CD8-positive, alpha-beta T cell (primary cell): ENCODE measurements at regions of chr5 and their contacts with region 1.

Region 1: GRCh38 chr5:69234457-69235268 is at the start of gene CDK7:
- DNase-seq: peak; percentile 83 to 96 (median 92)
- ATAC-seq: peak; percentile 99
- H3K4me3 ChIP-seq: peak within 1 kb of the TSS; percentile 71 to 98
- H3K4me3 Mint-ChIP-seq: peak within 1 kb of the TSS; percentile 94
- H3K27ac ChIP-seq: peak within 1 kb of the TSS; percentile 67 to 85
- H3K27ac Mint-ChIP-seq: peak within 1 kb of the TSS; percentile 89
- H3K4me1 ChIP-seq: peaks cover 20% of the 10 kb centered on the region
- H3K4me1 Mint-ChIP-seq: peaks cover 39% of the 10 kb centered on the region
- H3K27me3 ChIP-seq: no peaks in the 10 kb centered on the region
- H3K27me3 Mint-ChIP-seq: no peaks in the 10 kb centered on the region
- CTCF ChIP-seq: no peak
- total RNA-seq, gene CDK7: 27.5 to 29.4 TPM

Region 2: GRCh38 chr5:69042915-69043658 is 191.6 kb before region 1 on chr5:
- CTCF ChIA-PET with region 1: no interaction called
- POLR2A ChIA-PET with region 1: no interaction called
- intact Hi-C with region 1: loop called in 1 of 2 experiments (anchors 2 kb)
- DNase-seq: peak; percentile 50 to 95 (median 78)
- ATAC-seq: peak; percentile 97
- H3K4me3 ChIP-seq: peak overlapping the region; percentile 54 to 64
- H3K4me3 Mint-ChIP-seq: peak overlapping the region; percentile 89
- H3K27ac ChIP-seq: peak overlapping the region; percentile 69 to 81
- H3K27ac Mint-ChIP-seq: peak overlapping the region; percentile 95
- H3K4me1 ChIP-seq: peaks cover 3% of the 10 kb centered on the region
- H3K4me1 Mint-ChIP-seq: peaks cover 11% of the 10 kb centered on the region
- H3K27me3 ChIP-seq: no peaks in the 10 kb centered on the region
- H3K27me3 Mint-ChIP-seq: no peaks in the 10 kb centered on the region
- CTCF ChIP-seq: peak; percentile 88

Region 3: GRCh38 chr5:69166686-69167492 is 67.8 kb before region 1 on chr5 and contains the start of gene CCNB1:
- CTCF ChIA-PET with region 1: no interaction called
- POLR2A ChIA-PET with region 1: interaction called, 3 read pairs
- intact Hi-C with region 1: loop called (anchors 1 kb)
- DNase-seq: peak; percentile 93 to 98 (median 96)
- ATAC-seq: peak; percentile 100
- H3K4me3 ChIP-seq: peak within 1 kb of the TSS; percentile 84 to 87
- H3K4me3 Mint-ChIP-seq: peak within 1 kb of the TSS; percentile 94
- H3K27ac ChIP-seq: peak within 1 kb of the TSS; percentile 50 to 61
- H3K27ac Mint-ChIP-seq: peak within 1 kb of the TSS; percentile 84
- H3K4me1 ChIP-seq: peaks cover 9% of the 10 kb centered on the region
- H3K4me1 Mint-ChIP-seq: peaks cover 27% of the 10 kb centered on the region
- H3K27me3 ChIP-seq: no peaks in the 10 kb centered on the region
- H3K27me3 Mint-ChIP-seq: no peaks in the 10 kb centered on the region
- CTCF ChIP-seq: no peak
- total RNA-seq, gene CCNB1: 0.75 to 0.95 TPM

Region 4: GRCh38 chr5:69189162-69190086 is 45.2 kb before region 1 on chr5 and contains the start of gene CENPH:
- CTCF ChIA-PET with region 1: no interaction called
- POLR2A ChIA-PET with region 1: interaction called, 7 read pairs
- intact Hi-C with region 1: loop called (anchors 1 to 2 kb)
- DNase-seq: peak; percentile 82 to 93 (median 90)
- ATAC-seq: peak; percentile 94
- H3K4me3 ChIP-seq: peak within 1 kb of the TSS; percentile 75 to 77
- H3K4me3 Mint-ChIP-seq: peak within 1 kb of the TSS; percentile 91
- H3K27ac ChIP-seq: peak within 1 kb of the TSS; percentile 66 to 73
- H3K27ac Mint-ChIP-seq: peak within 1 kb of the TSS; percentile 84
- H3K4me1 ChIP-seq: peaks cover 10% of the 10 kb centered on the region
- H3K4me1 Mint-ChIP-seq: peaks cover 16% of the 10 kb centered on the region
- H3K27me3 ChIP-seq: no peaks in the 10 kb centered on the region
- H3K27me3 Mint-ChIP-seq: no peaks in the 10 kb centered on the region
- CTCF ChIP-seq: no peak
- total RNA-seq, gene CENPH: 4.1 to 4.6 TPM

Region 5: DNA sequence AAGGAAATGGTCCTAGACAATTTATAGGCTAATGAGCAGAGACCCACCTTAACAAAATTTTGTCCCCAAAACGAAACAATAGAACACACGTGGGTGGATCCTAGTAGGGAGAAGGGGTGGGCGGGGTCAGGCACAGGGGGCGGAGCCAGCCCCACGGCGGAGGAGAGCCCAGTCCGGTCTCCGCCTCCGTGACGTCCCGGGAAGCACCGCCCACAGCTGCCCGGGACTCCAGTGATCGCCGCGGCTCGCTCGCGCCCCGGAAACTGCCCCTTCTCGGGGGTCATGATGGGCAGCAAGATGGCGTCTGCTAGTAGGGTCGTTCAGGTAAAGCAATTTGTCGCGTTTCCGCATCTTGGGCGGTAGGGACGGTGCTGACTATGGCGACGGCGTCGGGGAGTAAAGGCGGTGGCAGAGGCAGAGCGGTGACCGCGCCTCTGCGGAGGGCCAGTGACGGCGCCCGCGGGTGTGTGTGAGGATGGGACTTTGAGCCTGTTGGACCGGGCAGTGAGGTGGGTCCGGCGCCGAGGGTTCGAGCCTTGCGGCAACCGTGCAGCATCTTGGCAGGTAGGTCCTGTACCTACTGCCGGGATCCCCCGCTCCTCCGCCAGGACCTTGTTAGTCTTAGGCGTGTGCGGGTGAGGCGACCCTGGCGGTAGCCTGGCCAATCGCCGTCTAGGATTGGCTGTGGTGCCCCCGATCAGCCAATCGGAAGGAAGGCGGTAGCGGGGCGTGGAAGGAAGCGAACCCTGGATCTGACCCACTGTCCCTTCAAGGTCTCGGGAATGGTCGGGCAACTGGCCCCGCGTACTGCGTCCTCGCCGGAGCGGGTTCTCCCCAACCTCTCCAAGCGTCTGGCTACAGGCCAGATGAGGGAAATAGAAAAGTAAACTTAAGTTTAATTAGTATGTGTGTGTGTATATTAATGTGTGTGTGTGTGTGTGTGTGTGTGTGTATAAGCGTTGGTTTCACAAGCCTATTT is 16.8 kb before region 1 on chr5:
- CTCF ChIA-PET with region 1: no interaction called
- POLR2A ChIA-PET with region 1: interaction called, 13 read pairs
- intact Hi-C with region 1: loop called (anchors 1 kb)
- DNase-seq: peak; percentile 90 to 97 (median 94)
- ATAC-seq: peak; percentile 92
- H3K4me3 ChIP-seq: peak overlapping the region; percentile 85 to 97
- H3K4me3 Mint-ChIP-seq: peak overlapping the region; percentile 100
- H3K27ac ChIP-seq: peak overlapping the region; percentile 91 to 95
- H3K27ac Mint-ChIP-seq: peak overlapping the region; percentile 99
- H3K4me1 ChIP-seq: peaks cover 15% of the 10 kb centered on the region
- H3K4me1 Mint-ChIP-seq: peaks cover 28% of the 10 kb centered on the region
- H3K27me3 ChIP-seq: no peaks in the 10 kb centered on the region
- H3K27me3 Mint-ChIP-seq: no peaks in the 10 kb centered on the region
- CTCF ChIP-seq: no peak